ENCODE measurements at regions of chr2 and their contacts with region 1.

Region 1: GRCh38 chr2:191811807-191812602 is 34.9 kb downstream of the CAVIN2 start:
- DNase-seq: peak; percentile 60

Region 2: GRCh38 chr2:192155511-192156118 is 343.6 kb after region 1 on chr2:
- CTCF ChIA-PET with region 1: interaction called, 12 read pairs
- POLR2A ChIA-PET with region 1: no interaction called
- DNase-seq: no peak

Region 3: GRCh38 chr2:192162392-192163042 is 350.5 kb after region 1 on chr2:
- CTCF ChIA-PET with region 1: interaction called, 33 read pairs
- POLR2A ChIA-PET with region 1: interaction called, 4 read pairs
- DNase-seq: peak; percentile 38

Region 4: GRCh38 chr2:192194265-192194865 is 382.4 kb after region 1 on chr2:
- CTCF ChIA-PET with region 1: no interaction called
- POLR2A ChIA-PET with region 1: no interaction called
- DNase-seq: no peak

Measured in HEK293T (cell line).